AG04450 (cell line): ENCODE measurements at regions of chr15 and their contacts with region 1.

Region 1: DNA sequence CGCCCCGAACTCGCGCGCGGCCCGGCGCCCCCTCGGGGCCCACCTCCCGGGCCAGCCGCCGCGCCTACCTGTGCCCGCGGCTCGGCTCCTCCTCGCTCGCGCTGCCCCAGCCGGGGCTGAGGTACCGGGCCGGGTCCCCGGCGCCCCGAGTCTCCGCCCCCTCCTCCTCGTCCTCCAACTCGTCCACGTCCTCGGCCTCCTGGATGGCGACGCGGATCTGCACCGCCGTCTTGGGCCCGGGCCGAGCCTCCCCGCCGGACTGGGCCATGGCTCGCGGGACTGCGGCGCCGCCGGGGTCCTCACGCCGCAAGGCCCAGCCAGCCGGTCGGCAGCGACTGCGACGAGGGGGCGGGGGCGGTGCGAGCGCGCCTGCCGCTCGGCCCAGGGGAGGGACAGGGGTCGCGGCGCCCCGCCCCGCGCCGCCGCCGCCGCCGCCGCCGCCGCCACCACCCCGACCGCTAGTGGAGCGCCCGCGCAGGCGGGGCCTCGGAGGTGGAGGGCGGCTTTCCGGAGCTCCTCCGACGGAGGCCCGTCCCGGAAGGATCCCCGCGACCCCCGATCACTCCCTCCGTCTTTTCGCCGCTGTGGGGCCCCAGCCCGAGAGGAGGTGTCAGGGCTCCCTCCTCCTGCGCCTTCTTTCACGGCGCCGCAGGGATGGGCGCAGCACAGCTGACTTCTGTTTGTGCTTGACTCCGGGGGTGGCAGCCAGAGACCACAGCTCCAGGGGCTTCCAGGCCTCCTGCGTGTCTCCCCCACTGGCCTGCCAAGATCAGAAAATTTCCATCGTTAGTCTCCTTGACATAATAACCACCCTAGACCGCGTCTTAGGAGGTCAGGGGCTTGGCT is at the start of gene LARP6:
- DNase-seq: no peak
- H3K4me3 ChIP-seq: peak within 1 kb of the TSS; percentile 98
- H3K27ac ChIP-seq: peak within 1 kb of the TSS; percentile 95
- H3K27me3 ChIP-seq: no peaks in the 10 kb centered on the region
- CTCF ChIP-seq: no peak
- polyA plus RNA-seq, gene LARP6: 188 and 235 TPM in 2 replicates

Region 2: GRCh38 chr15:70799667-70800450 is 54.2 kb before region 1 on chr15:
- CTCF ChIA-PET with region 1: no interaction called
- POLR2A ChIA-PET with region 1: interaction called, 14 read pairs
- DNase-seq: peak; percentile 95
- H3K4me3 ChIP-seq: no peak overlapping the region
- H3K27ac ChIP-seq: peak overlapping the region; percentile 92
- H3K27me3 ChIP-seq: no peaks in the 10 kb centered on the region
- CTCF ChIP-seq: no peak

Region 3: DNA sequence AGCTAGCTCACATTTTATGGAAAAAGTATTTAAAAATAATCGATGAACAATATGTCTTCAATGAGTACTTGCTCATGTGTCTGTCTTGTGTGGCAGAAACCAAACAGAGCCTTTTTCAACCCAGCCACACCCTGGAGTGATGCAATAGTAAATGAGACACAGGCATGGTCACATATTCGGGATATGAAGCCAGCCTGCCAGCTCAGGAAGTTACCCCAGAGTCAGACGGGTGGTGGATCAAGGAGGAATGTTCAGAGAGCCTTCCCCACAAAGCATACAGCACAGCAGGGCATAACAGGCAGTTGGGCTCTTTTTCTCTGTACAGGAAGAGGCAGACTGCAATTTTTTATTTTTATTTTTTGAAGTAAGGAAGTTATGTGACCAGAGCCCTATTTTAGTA is 27.4 kb before region 1 on chr15:
- CTCF ChIA-PET with region 1: interaction called, 10 read pairs
- POLR2A ChIA-PET with region 1: interaction called, 7 read pairs
- DNase-seq: no peak
- H3K4me3 ChIP-seq: no peak overlapping the region
- H3K27ac ChIP-seq: no peak overlapping the region
- H3K27me3 ChIP-seq: no peaks in the 10 kb centered on the region
- CTCF ChIP-seq: no peak

Region 4: DNA sequence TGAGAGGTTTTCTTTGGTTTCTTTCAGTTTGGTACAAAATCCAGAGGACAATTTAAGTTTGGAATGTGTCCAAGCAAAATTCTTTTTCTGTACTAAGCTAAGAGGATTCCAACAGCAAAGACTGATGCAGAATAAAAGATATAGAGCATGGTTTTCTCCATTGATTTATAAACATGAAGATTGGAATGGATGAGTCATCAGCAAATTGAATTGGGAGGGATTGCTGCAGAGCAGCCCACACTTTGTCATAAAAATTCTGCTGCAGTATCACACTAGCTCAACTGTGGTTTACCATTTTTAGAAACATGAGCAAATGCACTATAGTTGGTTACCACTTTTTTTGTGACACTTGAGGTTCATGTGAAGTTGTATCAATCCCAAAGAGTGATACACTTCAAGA is 16.0 kb after region 1 on chr15:
- CTCF ChIA-PET with region 1: interaction called, 11 read pairs
- POLR2A ChIA-PET with region 1: interaction called, 17 read pairs
- DNase-seq: no peak
- H3K4me3 ChIP-seq: no peak overlapping the region
- H3K27ac ChIP-seq: no peak overlapping the region
- H3K27me3 ChIP-seq: no peaks in the 10 kb centered on the region
- CTCF ChIP-seq: no peak

Region 5: GRCh38 chr15:71411538-71412482 is 557.8 kb after region 1 on chr15:
- CTCF ChIA-PET with region 1: no interaction called
- POLR2A ChIA-PET with region 1: no interaction called
- DNase-seq: no peak
- H3K4me3 ChIP-seq: no peak overlapping the region
- H3K27ac ChIP-seq: peak overlapping the region; percentile 52
- H3K27me3 ChIP-seq: no peaks in the 10 kb centered on the region
- CTCF ChIP-seq: peak; percentile 42